Calu3 (cell line): ENCODE measurements at regions of chr1 and their contacts with region 1.

Region 1: DNA sequence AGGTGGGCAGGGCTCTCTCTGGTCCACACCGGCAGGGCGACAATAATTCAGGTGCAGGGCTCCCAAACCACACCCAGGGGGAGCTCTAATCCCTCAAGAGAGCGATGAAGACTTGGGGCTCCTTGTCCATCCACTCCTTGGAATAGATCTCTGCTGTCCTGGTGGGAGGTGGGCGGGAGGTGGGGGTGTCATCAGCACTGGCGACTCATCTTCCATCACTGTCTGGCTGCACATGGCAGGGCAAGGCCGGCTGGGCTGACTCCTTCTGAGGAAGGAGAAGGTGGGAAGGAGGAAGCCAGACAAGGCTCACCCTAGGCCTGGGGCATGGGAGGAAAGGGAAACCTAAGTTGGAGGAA is 29.3 kb downstream of the TNNT2 start:
- DNase-seq: peak; percentile 80
- H3K4me3 Mint-ChIP-seq: no peak overlapping the region
- H3K27ac Mint-ChIP-seq: no peak overlapping the region
- H3K4me1 Mint-ChIP-seq: peaks cover 7% of the 10 kb centered on the region
- H3K27me3 Mint-ChIP-seq: peaks cover 36% of the 10 kb centered on the region
- CTCF ChIP-seq: peak; percentile 71

Region 2: DNA sequence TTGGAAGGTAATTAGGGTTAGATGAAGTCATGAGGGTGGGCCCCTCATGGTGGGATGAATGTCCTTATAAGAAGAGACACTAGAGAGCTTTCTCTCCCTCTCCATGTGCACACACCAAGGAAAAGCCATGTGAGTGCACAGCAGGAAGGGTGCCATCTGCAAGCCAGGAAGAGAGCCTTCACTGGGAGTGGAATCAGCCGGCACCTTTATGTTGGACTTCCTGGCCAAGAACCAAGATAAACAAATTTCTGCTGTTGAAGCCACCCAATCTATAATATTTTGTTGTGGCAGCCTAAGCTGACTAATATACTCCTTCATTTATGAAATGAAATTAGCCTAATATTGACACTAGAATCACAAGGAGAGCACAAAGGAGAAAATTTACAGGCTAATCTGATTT is 103.1 kb before region 1 on chr1:
- CTCF ChIA-PET with region 1: interaction called, 4 read pairs
- intact Hi-C with region 1: loop called (anchors 5 kb)
- DNase-seq: no peak
- H3K4me3 Mint-ChIP-seq: no peak overlapping the region
- H3K27ac Mint-ChIP-seq: no peak overlapping the region
- H3K4me1 Mint-ChIP-seq: peaks cover 8% of the 10 kb centered on the region
- H3K27me3 Mint-ChIP-seq: peaks cover 85% of the 10 kb centered on the region
- CTCF ChIP-seq: no peak

Region 3: DNA sequence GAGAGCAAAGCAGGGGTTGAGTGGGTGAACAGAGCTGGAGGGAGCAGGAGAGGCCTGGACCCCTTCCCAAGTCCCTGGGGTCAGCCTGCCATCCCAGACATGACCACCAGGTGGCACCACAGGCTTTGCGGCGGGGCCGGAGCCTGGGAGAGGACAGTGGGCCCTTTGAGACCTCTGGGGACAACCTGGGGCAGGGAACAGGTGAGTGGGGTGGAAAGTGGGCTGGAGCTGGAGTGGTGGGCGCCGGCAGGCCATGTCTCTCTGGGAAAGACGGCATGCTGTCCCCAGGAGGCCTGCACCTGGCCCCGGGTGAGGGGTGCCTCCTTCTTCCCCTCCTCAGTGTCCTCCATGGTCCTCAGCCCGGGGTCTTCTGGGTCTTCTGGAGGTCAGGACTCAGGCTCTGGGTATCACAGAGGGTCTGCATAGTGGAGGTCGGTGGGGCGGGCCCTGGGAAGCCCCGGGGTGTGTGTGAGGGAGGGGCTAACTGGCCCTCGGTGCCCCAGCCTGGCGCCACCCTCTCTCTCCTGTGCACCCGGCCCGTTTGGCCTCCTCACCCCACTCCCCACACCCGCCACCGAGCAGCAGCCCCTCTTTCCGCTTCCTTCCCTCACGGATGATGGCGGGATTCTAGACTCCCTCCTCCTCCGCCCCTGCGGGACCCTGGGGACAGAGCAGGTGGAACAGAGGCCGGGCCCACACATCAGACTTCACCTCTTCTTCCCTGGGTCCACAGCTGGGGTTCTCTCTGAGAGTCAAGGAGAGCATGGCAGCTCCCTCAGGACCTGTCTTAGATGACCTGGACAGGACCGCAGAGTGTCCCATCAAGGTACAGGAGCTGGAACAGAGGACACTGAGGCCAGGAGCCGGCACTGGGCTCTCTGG is 93.3 kb before region 1 on chr1:
- CTCF ChIA-PET with region 1: interaction called, 29 read pairs
- intact Hi-C with region 1: no loop called
- DNase-seq: peak; percentile 91
- H3K4me3 Mint-ChIP-seq: no peak overlapping the region
- H3K27ac Mint-ChIP-seq: no peak overlapping the region
- H3K4me1 Mint-ChIP-seq: no peaks in the 10 kb centered on the region
- H3K27me3 Mint-ChIP-seq: peaks cover 24% of the 10 kb centered on the region
- CTCF ChIP-seq: peak; percentile 99

Region 4: DNA sequence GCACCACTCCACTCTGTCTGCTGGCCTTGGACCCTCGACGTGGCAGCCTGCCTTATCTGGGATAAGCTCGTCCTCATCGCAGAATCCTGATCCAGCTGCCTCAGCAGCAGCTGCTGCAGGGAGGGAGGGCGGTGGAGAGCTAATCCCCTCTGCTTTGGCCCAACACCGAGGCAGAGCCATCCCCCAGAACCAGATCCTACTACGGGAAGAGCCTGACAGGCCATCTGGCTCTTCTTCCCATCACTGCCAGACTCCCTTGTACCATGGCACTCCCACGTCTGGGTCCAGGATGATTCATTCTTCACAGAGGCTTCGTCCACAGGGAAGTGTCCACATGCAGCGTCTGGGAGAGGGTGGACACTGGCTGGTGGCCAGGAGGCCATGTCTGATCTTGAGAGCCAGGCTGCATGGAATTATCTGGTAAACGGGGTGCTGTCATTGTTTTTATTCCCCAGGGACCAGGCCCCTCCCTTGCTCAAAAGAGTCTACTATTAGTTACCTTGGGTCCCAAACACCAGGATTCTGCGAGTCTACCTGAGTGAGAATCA is 79.5 kb before region 1 on chr1:
- CTCF ChIA-PET with region 1: interaction called, 5 read pairs
- intact Hi-C with region 1: loop called (anchors 5 kb)
- DNase-seq: peak; percentile 48
- H3K4me3 Mint-ChIP-seq: no peak overlapping the region
- H3K27ac Mint-ChIP-seq: peak overlapping the region; percentile 40
- H3K4me1 Mint-ChIP-seq: peaks cover 42% of the 10 kb centered on the region
- H3K27me3 Mint-ChIP-seq: no peaks in the 10 kb centered on the region
- CTCF ChIP-seq: no peak

Region 5: DNA sequence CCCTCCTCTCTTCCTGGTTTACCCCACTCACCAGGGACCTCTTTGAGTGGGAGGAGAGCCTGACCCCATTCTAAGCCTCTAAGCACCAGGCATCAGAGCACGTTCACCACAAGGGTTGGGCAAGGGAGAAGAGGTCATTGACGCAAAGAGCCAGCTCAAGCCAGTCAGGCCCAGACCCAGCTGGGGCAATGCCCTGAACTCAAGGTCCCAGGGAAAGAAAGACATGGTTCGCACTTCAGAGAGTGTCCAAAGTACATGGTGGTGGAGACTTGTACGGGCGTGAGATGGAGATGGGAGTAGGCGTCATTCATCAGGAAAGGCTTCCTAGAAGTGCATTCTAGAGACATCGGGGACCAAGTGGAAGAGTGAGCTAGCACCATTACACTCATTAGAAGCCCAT is 57.6 kb before region 1 on chr1:
- CTCF ChIA-PET with region 1: interaction called, 10 read pairs
- intact Hi-C with region 1: no loop called
- DNase-seq: no peak
- H3K4me3 Mint-ChIP-seq: no peak overlapping the region
- H3K27ac Mint-ChIP-seq: no peak overlapping the region
- H3K4me1 Mint-ChIP-seq: peaks cover 23% of the 10 kb centered on the region
- H3K27me3 Mint-ChIP-seq: peaks cover 58% of the 10 kb centered on the region
- CTCF ChIP-seq: no peak

Region 6: GRCh38 chr1:201309426-201309825 is 38.8 kb before region 1 on chr1:
- CTCF ChIA-PET with region 1: interaction called, 15 read pairs
- intact Hi-C with region 1: loop called (anchors 2 kb)
- DNase-seq: peak; percentile 85
- H3K4me3 Mint-ChIP-seq: no peak overlapping the region
- H3K27ac Mint-ChIP-seq: peak overlapping the region; percentile 68
- H3K4me1 Mint-ChIP-seq: peaks cover 36% of the 10 kb centered on the region
- H3K27me3 Mint-ChIP-seq: no peaks in the 10 kb centered on the region
- CTCF ChIP-seq: no peak

Region 7: DNA sequence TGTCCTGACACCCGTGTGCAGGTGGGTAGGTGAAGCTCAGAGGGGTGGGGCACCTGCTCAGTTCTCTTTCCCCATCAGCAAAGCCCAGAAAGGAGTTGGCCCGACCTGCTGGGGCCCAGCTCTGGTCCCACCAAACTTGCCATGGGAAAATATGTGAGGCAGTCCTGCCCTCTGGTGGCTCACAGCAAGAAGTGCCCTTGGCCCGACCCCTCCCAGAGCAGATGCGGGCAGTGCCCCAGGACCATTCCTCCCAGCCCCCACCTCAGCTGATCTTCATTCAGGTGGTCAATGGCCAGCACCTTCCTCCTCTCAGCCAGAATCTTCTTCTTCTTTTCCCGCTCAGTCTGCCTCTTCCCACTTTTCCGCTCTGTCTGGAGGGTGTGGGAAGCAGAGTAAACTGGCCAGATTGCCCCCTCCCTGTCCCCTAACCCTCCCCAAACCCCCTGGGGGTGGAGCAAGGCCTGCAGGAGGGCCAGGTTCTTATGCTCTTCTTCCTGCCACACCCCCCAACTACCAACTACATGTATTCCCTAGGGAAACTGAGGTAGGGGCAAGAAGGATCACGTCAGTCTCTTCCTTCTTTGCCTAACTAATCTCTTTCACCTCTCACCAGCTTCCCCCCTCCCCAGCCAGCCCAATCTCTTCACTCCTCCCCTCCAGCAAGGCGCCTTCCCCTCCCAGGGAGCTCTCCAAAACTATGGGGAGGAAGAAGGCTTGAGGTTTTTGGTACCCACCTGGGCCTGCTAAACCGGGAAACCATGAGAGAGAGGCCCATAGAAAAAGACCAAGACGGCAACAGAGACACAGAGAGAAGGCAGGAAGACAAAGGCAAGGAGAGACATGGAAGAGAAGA is 13.7 kb after region 1 on chr1:
- CTCF ChIA-PET with region 1: interaction called, 17 read pairs
- intact Hi-C with region 1: no loop called
- DNase-seq: peak; percentile 75
- H3K4me3 Mint-ChIP-seq: no peak overlapping the region
- H3K27ac Mint-ChIP-seq: no peak overlapping the region
- H3K4me1 Mint-ChIP-seq: no peaks in the 10 kb centered on the region
- H3K27me3 Mint-ChIP-seq: peaks cover 87% of the 10 kb centered on the region
- CTCF ChIP-seq: peak; percentile 95